Common myeloid progenitor, CD34-positive (primary cell): ENCODE measurements at regions of chr2 and their contacts with region 1.

Region 1: DNA sequence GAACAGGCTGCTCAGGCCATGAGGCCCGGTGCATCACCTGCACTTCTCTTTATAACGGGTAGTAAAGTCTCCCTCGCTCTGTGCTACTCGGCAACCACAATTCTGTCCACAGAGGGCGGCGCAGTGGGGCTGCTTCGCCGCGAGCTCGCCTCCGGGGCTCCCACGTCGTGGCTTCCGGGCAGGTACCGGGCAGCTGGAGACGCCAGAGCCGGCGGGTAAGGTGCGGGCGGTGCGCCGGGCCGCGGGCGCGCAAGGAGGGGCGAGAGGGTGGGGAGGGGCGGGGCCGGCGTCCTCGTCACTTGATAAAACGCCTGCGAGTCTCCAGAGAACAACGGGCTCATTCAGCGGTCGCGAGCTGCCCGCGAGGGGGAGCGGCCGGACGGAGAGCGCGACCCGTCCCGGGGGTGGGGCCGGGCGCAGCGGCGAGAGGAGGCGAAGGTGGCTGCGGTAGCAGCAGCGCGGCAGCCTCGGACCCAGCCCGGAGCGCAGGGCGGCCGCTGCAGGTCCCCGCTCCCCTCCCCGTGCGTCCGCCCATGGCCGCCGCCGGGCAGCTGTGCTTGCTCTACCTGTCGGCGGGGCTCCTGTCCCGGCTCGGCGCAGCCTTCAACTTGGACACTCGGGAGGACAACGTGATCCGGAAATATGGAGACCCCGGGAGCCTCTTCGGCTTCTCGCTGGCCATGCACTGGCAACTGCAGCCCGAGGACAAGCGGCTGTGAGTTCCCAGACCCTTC is at the start of gene ITGA6:
- DNase-seq: peak; percentile 77 to 87 (median 79)
- H3K4me3 ChIP-seq: peak within 1 kb of the TSS; percentile 73 to 89 (median 83)
- H3K27ac ChIP-seq: peak within 1 kb of the TSS in 1 of 2 experiments; percentile 9
- H3K4me1 ChIP-seq: peaks cover 22 to 49% (median 42%) of the 10 kb centered on the region in 4 experiments
- H3K27me3 ChIP-seq: no peaks in the 10 kb centered on the region

Region 2: DNA sequence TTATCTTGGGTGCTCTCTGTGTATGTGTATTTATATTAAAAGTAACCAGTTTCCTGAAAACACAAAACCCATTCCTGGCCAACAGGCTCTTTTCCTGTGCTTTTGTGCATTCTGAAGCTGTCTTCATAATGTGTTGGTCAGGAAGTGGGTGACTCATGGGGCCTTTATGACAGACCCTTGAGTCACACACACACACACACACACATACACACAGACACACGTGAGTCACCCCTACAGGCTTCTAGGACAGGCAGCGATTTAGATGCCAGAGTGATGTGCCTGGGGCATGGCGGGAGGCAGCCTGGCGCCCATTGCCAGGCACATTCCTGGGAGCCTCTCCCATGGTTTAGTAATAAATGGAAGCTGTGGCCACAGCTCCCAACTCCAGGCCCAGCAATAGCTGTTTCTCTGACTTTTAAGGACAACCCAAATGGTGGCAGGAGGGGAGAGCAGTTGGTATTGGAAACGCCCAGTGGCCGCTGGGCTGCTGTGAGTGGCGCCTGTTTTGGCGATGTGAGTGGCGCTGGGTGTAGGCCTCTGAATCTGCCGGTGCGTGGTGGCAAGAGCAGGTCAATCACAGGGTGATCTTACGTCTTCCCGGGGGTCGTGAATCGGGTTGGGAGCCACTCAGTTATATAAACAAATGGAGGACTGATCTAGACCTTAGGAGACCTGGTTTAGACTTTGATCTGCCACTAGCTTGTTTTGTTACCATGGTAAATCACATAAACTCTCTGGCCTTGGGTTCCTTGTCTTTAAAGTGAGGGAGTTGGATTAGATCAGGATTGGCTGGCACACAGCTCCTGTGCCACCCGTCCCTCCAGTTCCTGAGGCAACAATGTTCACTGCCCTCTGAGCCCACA is 174.0 kb before region 1 on chr2:
- CTCF ChIA-PET with region 1: no interaction called
- POLR2A ChIA-PET with region 1: no interaction called
- DNase-seq: peak; percentile 97 to 99 (median 99)
- H3K4me3 ChIP-seq: peak overlapping the region in 2 of 7 experiments; percentile 0 to 19
- H3K27ac ChIP-seq: peak overlapping the region; percentile 40 to 44
- H3K4me1 ChIP-seq: peaks cover 5 to 51% (median 46%) of the 10 kb centered on the region in 4 experiments
- H3K27me3 ChIP-seq: no peaks in the 10 kb centered on the region

Region 3: DNA sequence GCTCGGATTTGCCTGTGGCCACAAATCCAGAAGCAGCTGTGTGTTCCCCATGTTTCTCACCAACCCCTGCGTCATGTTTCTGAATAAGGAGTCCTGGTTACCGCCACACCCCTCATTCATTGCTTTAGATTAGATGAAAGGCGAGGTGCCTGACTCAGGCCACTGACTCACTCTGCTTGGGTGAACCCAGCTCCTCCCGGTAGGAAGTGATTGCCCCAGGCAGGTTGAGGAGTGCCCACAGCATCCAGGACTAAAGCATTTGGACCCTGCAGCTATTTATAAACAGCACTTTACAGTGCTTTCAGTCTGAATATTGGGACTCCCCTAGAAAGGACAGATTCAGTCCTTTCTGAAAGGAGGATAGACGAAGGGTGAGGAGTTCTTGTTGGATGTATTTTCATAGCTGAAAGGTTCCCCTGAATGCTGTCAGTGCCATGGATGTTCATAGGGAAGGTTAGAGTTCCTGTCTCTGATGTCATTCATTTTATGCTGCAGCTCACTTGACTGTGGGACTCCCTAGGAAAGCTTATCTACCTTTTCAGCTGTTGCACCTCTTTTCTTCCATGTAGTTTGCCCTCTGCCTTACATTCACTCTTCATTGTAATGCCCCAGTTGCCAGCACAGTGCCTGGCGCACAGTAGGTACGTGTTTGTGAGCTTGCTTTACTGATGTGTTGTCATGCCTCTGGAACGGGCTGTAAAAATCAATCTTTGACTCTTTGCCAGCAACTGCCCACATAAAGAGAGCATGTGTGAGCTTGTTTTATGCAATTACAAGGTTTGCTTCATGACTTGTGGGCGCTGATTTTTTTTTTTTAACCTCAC is 14.9 kb after region 1 on chr2:
- CTCF ChIA-PET with region 1: interaction called, 93 read pairs
- POLR2A ChIA-PET with region 1: interaction called, 3 read pairs
- DNase-seq: peak in 2 of 3 donors; percentile 31 to 48
- H3K4me3 ChIP-seq: no peak overlapping the region
- H3K27ac ChIP-seq: no peak overlapping the region
- H3K4me1 ChIP-seq: peaks cover 6 to 38% (median 20%) of the 10 kb centered on the region in 4 experiments
- H3K27me3 ChIP-seq: no peaks in the 10 kb centered on the region